ENCODE measurements at regions of chr7 and their contacts with region 1.

Region 1: GRCh38 chr7:106112117-106112971 is at the start of gene SYPL1:
- DNase-seq: peak; percentile 93 to 97
- ATAC-seq: peak; percentile 86 to 93 (median 88)
- H3K4me3 ChIP-seq: peak within 1 kb of the TSS; percentile 84
- H3K27ac ChIP-seq: peak within 1 kb of the TSS; percentile 99
- H3K4me1 ChIP-seq: peaks cover 54% of the 10 kb centered on the region
- H3K27me3 ChIP-seq: no peaks in the 10 kb centered on the region
- CTCF ChIP-seq: no peak
- total RNA-seq, gene SYPL1: 68.3 to 113 (median 80.2) TPM

Region 2: GRCh38 chr7:105013221-105013815 is 1099.0 kb before region 1 on chr7:
- intact Hi-C with region 1: loop called in 1 of 2 experiments (anchors 10 kb)
- DNase-seq: peak; percentile 95 to 99
- ATAC-seq: peak; percentile 81 to 86 (median 84)
- H3K4me3 ChIP-seq: peak overlapping the region; percentile 92
- H3K27ac ChIP-seq: peak overlapping the region; percentile 100
- H3K4me1 ChIP-seq: peaks cover 35% of the 10 kb centered on the region
- H3K27me3 ChIP-seq: no peaks in the 10 kb centered on the region
- CTCF ChIP-seq: peak; percentile 45

Region 3: GRCh38 chr7:106031300-106032035 is 80.9 kb before region 1 on chr7:
- intact Hi-C with region 1: no loop called
- DNase-seq: no peak
- ATAC-seq: peak in 3 of 4 donors; percentile 20 to 59 (median 58)
- H3K4me3 ChIP-seq: no peak overlapping the region
- H3K27ac ChIP-seq: no peak overlapping the region
- H3K4me1 ChIP-seq: peaks cover 8% of the 10 kb centered on the region
- H3K27me3 ChIP-seq: no peaks in the 10 kb centered on the region
- CTCF ChIP-seq: no peak

Region 4: DNA sequence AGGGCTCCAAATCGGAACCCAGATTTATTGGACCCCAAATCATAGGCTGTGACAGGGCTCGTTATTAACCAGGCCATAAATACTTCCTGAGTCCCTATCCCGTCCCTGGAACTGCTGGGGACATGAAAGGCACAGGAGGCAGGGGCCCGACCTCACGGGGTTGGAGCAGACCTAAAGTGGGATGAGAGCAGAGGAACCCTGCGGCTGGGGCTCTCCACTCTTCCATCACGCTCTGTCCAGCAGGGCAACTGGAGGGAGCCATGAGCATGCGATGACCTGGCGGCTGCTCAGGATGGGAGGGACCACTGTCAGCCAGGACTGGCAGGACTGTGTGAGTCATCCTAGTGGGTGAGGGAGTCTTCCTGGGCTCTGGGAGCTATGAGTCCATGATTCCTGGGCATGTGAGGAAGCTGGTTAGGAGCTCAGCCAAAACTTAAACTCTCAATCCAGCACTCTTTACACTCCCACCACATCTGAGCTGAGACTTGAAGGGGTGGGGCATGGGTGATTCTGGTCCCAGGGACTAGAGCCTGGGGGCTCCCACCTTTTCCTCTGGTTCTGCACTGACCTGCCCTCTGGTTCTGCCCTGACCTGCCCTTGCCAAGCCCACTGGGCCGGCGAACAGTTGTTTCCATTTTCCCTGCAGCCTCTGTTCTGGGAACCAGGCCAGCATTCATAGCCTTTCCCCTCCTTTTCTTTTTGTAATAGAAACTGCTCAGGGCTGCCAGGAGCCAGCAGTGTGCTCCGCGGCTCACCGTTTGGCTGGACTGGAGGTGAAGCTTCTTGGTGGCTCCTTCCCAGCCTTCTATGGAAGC is 47.4 kb before region 1 on chr7:
- intact Hi-C with region 1: loop called (anchors 5 kb)
- DNase-seq: peak; percentile 88 to 94
- ATAC-seq: peak; percentile 96 to 98 (median 97)
- H3K4me3 ChIP-seq: peak overlapping the region; percentile 57
- H3K27ac ChIP-seq: peak overlapping the region; percentile 87
- H3K4me1 ChIP-seq: peaks cover 20% of the 10 kb centered on the region
- H3K27me3 ChIP-seq: no peaks in the 10 kb centered on the region
- CTCF ChIP-seq: peak; percentile 16

Region 5: DNA sequence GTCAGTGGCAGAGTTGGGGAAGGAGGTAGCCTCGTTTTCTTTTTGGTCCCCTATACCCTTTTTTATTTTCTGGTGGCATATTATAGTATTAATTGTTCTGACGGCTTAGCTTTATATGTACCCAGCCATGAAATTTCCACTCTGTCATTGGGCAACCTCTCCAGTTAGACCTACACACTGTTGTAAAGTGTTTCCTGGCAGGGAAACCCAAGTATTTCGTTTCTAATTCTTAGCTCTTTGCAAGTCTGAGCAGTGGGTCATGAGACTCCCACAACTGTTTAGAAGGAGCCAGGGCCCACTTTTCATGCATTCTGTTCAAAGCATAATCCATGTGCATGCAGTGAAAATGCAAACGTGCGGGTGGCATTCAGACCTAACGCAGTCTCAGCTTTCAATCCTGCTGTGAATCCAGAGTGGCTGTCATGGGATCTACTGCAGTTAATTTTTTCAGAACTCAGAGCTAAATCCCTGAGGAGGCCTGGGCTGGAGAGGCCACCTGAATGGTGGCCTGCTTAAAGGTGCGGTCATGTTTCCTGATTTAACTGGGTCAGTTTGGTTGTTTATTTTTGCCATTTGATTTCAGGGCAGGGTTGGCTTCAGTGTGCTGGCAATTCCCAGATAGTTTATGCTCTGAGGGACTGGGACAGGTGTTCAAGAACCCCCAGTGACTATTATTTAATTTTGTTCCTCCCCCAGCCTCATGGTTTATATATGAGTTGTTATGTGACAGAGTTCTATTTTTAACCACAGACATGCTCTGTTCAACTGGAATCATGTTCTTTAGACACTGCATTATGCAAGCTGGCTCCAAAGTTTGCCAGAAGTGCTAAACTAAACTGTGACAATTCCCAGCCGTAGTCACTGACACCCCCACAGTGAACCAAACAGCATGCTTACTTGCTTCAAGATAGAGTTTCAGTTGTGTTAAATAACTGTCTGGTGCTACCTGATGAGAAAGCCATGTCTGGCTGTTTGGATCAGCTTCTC is 27.2 kb after region 1 on chr7:
- intact Hi-C with region 1: loop called in 1 of 2 experiments (anchors 1 kb)
- DNase-seq: peak; percentile 37 to 68
- ATAC-seq: peak; percentile 93 to 97 (median 96)
- H3K4me3 ChIP-seq: peak overlapping the region; percentile 52
- H3K27ac ChIP-seq: peak overlapping the region; percentile 96
- H3K4me1 ChIP-seq: peaks cover 21% of the 10 kb centered on the region
- H3K27me3 ChIP-seq: no peaks in the 10 kb centered on the region
- CTCF ChIP-seq: no peak

Region 6: DNA sequence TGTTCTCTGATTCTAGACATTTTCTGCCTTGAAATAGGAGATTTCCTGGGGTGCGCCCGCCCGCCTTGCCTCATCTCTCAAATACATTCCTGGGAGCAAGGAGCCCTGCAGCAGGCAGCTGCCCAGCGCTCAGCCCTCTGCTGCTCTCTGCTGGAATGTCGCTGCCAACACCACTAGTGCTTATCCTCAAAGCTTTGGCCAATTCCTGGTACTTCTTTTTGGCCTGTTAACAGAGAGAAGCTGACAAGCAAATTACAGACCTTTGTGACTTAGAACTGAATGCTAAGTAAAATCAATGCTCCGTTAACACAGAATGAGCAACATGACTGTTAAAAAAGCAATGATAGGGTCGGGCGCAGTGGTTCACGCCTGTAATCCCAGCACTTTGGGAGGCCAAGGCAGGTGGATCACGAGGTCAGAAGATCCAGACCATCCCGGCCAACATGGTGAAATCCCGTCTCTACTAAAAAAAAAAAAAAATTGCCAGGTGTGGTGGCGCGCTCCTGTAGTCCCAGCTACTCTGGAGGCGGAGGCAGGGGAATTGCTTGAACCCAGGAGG is 41.6 kb after region 1 on chr7:
- intact Hi-C with region 1: loop called (anchors 1 to 5 kb)
- DNase-seq: peak; percentile 79 to 91
- ATAC-seq: peak; percentile 96 to 100 (median 98)
- H3K4me3 ChIP-seq: peak overlapping the region; percentile 34
- H3K27ac ChIP-seq: no peak overlapping the region
- H3K4me1 ChIP-seq: peaks cover 10% of the 10 kb centered on the region
- H3K27me3 ChIP-seq: no peaks in the 10 kb centered on the region
- CTCF ChIP-seq: peak; percentile 96

Region 7: DNA sequence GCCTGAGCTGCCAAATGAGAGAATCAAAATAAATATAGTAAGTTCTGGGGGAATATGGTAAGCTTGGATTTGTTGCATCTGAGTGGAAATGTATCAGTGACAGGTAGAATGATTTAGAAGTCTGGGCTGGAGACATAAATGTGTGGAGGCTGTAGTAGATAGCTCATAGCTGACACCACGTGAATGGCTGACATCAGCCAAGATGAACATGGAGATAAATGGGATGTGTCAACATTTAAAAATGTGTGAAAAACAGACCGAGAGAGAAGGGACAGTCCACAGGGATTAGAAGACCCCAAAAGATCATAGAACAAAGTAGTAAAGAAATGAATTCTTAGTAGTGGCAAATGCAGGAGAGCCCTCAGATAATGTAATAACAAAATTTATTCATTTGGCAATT is 131.5 kb after region 1 on chr7:
- intact Hi-C with region 1: no loop called
- DNase-seq: no peak
- ATAC-seq: peak in 2 of 4 donors; percentile 30 to 39
- H3K4me3 ChIP-seq: no peak overlapping the region
- H3K27ac ChIP-seq: no peak overlapping the region
- H3K4me1 ChIP-seq: no peaks in the 10 kb centered on the region
- H3K27me3 ChIP-seq: no peaks in the 10 kb centered on the region
- CTCF ChIP-seq: no peak

Region 8: GRCh38 chr7:106317971-106318370 is 205.6 kb after region 1 on chr7:
- intact Hi-C with region 1: no loop called
- DNase-seq: no peak
- ATAC-seq: no peak
- H3K4me3 ChIP-seq: no peak overlapping the region
- H3K27ac ChIP-seq: no peak overlapping the region
- H3K4me1 ChIP-seq: no peaks in the 10 kb centered on the region
- H3K27me3 ChIP-seq: no peaks in the 10 kb centered on the region
- CTCF ChIP-seq: no peak

Measured in psoas muscle (tissue), 8 donors.